CD8-positive, alpha-beta memory T cell (primary cell): ENCODE measurements at regions of chr10 and their contacts with region 1.

Region 1: GRCh38 chr10:62816331-62817120 is at the start of gene EGR2:
- DNase-seq: peak; percentile 87 to 99 (median 96)
- H3K4me3 ChIP-seq: peak within 1 kb of the TSS; percentile 91
- H3K4me3 Mint-ChIP-seq: peak within 1 kb of the TSS; percentile 91 to 100 (median 96)
- H3K27ac ChIP-seq: peak within 1 kb of the TSS; percentile 72
- H3K27ac Mint-ChIP-seq: peak within 1 kb of the TSS; percentile 89 to 99 (median 98)
- H3K4me1 ChIP-seq: peaks cover 39% of the 10 kb centered on the region
- H3K4me1 Mint-ChIP-seq: peaks cover 39 to 60% (median 46%) of the 10 kb centered on the region in 3 donors
- H3K27me3 ChIP-seq: peaks cover 18% of the 10 kb centered on the region
- H3K27me3 Mint-ChIP-seq: peaks cover 26 to 45% of the 10 kb centered on the region in 2 donors
- total RNA-seq, gene EGR2: 87.8 to 89.9 TPM

Region 2: DNA sequence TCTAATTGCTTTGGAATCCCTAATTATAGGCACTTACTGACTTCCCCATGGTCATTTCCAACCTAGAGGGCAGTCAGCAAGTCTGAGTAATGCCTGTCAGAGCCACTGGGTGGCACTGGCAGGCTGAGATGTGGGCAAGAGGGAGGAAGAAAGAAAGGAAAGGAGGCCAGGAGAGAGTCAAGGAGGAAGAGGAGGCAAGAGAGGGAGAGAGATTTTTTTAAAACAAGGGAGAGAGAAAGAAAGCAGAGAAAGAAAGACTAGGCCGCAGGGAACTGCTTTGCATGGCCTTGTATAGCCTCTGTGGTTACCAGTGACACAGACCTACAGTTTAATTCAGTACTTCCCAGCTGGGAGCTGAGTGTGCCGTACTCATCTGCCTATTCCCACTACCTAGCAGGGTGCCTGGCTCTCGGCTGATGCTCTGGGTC is 222.4 kb before region 1 on chr10:
- CTCF ChIA-PET with region 1: interaction called, 52 read pairs
- POLR2A ChIA-PET with region 1: interaction called, 3 read pairs
- DNase-seq: peak; percentile 28 to 62 (median 34)
- H3K4me3 ChIP-seq: no peak overlapping the region
- H3K4me3 Mint-ChIP-seq: no peak overlapping the region
- H3K27ac ChIP-seq: no peak overlapping the region
- H3K27ac Mint-ChIP-seq: no peak overlapping the region
- H3K4me1 ChIP-seq: no peaks in the 10 kb centered on the region
- H3K4me1 Mint-ChIP-seq: peaks cover 0 to 5% (median 0%) of the 10 kb centered on the region in 3 donors
- H3K27me3 ChIP-seq: no peaks in the 10 kb centered on the region
- H3K27me3 Mint-ChIP-seq: peaks cover 7 to 10% of the 10 kb centered on the region in 2 donors

Region 3: GRCh38 chr10:62618576-62619412 is 197.7 kb before region 1 on chr10:
- CTCF ChIA-PET with region 1: interaction called, 91 read pairs
- POLR2A ChIA-PET with region 1: no interaction called
- DNase-seq: no peak
- H3K4me3 ChIP-seq: no peak overlapping the region
- H3K4me3 Mint-ChIP-seq: peak overlapping the region in 1 of 7 donors; percentile 25
- H3K27ac ChIP-seq: no peak overlapping the region
- H3K27ac Mint-ChIP-seq: peak overlapping the region in 1 of 8 donors; percentile 82
- H3K4me1 ChIP-seq: peaks cover 4% of the 10 kb centered on the region
- H3K4me1 Mint-ChIP-seq: peaks cover 24 to 36% (median 29%) of the 10 kb centered on the region in 3 donors
- H3K27me3 ChIP-seq: no peaks in the 10 kb centered on the region
- H3K27me3 Mint-ChIP-seq: no peaks in the 10 kb centered on the region

Region 4: GRCh38 chr10:62637249-62638061 is 179.1 kb before region 1 on chr10:
- CTCF ChIA-PET with region 1: interaction called, 50 read pairs
- POLR2A ChIA-PET with region 1: interaction called, 17 read pairs
- DNase-seq: peak; percentile 39 to 78 (median 76)
- H3K4me3 ChIP-seq: peak overlapping the region; percentile 55
- H3K4me3 Mint-ChIP-seq: no peak overlapping the region
- H3K27ac ChIP-seq: peak overlapping the region; percentile 70
- H3K27ac Mint-ChIP-seq: no peak overlapping the region
- H3K4me1 ChIP-seq: peaks cover 32% of the 10 kb centered on the region
- H3K4me1 Mint-ChIP-seq: peaks cover 8 to 24% (median 10%) of the 10 kb centered on the region in 3 donors
- H3K27me3 ChIP-seq: no peaks in the 10 kb centered on the region
- H3K27me3 Mint-ChIP-seq: no peaks in the 10 kb centered on the region

Region 5: DNA sequence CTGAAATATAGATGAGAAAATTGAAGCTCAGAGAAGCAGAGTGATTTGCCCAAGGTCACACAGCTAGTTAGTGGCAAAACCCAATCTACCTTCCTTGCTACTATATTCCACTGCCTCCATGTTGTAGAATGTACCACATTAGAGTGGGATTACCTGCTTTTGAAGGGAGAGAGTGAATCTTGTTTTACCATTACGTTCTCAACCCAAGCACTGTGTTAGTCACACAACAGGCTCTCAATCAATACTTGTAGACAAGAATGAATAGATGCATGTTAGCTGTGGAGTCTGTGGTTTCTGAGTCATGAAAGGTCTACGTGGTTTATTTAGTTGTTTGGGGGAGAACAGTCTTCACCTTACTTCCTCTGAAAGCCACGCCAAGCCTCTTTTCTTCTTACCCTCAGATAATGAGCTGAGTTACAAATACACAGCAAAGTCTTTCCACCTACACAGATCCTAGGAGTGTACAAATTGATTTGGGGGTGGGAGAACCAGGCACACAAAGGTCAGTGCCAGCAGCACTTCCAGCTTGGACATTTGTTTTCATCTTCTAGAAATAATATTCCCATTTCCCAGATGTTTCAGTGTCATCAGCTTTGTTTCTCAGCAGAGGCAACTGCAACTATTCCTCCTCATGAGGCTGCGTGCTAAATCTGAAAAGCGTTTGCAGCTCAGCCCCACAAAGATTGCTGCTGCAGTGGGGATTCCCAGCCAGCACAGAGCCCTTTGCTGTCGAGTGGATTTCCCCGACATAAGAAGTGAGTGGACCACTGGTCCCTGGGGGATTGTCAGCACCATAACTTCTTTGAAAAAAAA is 83.5 kb before region 1 on chr10:
- CTCF ChIA-PET with region 1: interaction called, 10 read pairs
- POLR2A ChIA-PET with region 1: interaction called, 11 read pairs
- DNase-seq: peak; percentile 22 to 81 (median 71)
- H3K4me3 ChIP-seq: no peak overlapping the region
- H3K4me3 Mint-ChIP-seq: peak overlapping the region in 5 of 7 donors; percentile 12 to 63 (median 48)
- H3K27ac ChIP-seq: peak overlapping the region; percentile 8
- H3K27ac Mint-ChIP-seq: no peak overlapping the region
- H3K4me1 ChIP-seq: peaks cover 44% of the 10 kb centered on the region
- H3K4me1 Mint-ChIP-seq: peaks cover 10 to 20% (median 16%) of the 10 kb centered on the region in 3 donors
- H3K27me3 ChIP-seq: no peaks in the 10 kb centered on the region
- H3K27me3 Mint-ChIP-seq: no peaks in the 10 kb centered on the region

Region 6: GRCh38 chr10:62804356-62805230 is 11.9 kb before region 1 on chr10 and contains the start of gene ADO:
- CTCF ChIA-PET with region 1: interaction called, 76 read pairs
- POLR2A ChIA-PET with region 1: interaction called, 63 read pairs
- DNase-seq: peak; percentile 66 to 84 (median 79)
- H3K4me3 ChIP-seq: peak within 1 kb of the TSS; percentile 84
- H3K4me3 Mint-ChIP-seq: peak within 1 kb of the TSS; percentile 89 to 97 (median 97)
- H3K27ac ChIP-seq: peak within 1 kb of the TSS; percentile 88
- H3K27ac Mint-ChIP-seq: peak within 1 kb of the TSS; percentile 94 to 99 (median 98)
- H3K4me1 ChIP-seq: peaks cover 32% of the 10 kb centered on the region
- H3K4me1 Mint-ChIP-seq: peaks cover 38 to 44% (median 42%) of the 10 kb centered on the region in 3 donors
- H3K27me3 ChIP-seq: no peaks in the 10 kb centered on the region
- H3K27me3 Mint-ChIP-seq: peaks cover 0 to 4% of the 10 kb centered on the region in 2 donors
- total RNA-seq, gene ADO: 38.4 to 39.4 TPM